Activated naive CD4-positive, alpha-beta T cell treated with anti-CD3 and anti-CD28 coated beads for 36 hours (primary cell): ENCODE measurements at regions of chr6 and their contacts with region 1.

Region 1: GRCh38 chr6:127302728-127303660 is 36.3 kb downstream of the RNF146 start:
- DNase-seq: peak; percentile 72
- H3K4me3 Mint-ChIP-seq: no peak overlapping the region
- H3K27ac Mint-ChIP-seq: no peak overlapping the region
- H3K4me1 Mint-ChIP-seq: peaks cover 42% of the 10 kb centered on the region
- H3K27me3 Mint-ChIP-seq: no peaks in the 10 kb centered on the region

Region 2: GRCh38 chr6:127243501-127243900 is 59.5 kb before region 1 on chr6:
- CTCF ChIA-PET with region 1: no interaction called
- intact Hi-C with region 1: no loop called
- DNase-seq: no peak
- H3K4me3 Mint-ChIP-seq: no peak overlapping the region
- H3K27ac Mint-ChIP-seq: no peak overlapping the region
- H3K4me1 Mint-ChIP-seq: no peaks in the 10 kb centered on the region
- H3K27me3 Mint-ChIP-seq: peaks cover 2% of the 10 kb centered on the region

Region 3: DNA sequence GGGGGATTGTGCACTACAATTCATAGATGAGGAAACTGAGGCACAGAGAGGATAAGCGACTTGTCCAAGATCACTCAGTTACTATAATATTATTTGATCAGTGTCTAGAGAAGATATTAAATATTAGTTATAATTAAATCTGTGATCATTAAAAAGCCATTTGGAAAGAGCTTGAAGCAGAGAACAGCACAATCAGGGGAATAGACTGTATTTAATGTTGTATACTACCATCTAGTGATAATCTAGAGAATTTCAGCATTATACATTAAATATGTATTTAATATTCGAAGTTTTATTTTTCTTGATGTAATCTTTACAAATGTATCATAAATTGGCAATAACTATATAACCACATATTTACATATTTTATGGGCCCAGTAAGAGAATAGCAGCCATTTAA is 236.3 kb after region 1 on chr6:
- CTCF ChIA-PET with region 1: interaction called, 12 read pairs
- intact Hi-C with region 1: loop called (anchors 1 kb)
- DNase-seq: no peak
- H3K4me3 Mint-ChIP-seq: no peak overlapping the region
- H3K27ac Mint-ChIP-seq: no peak overlapping the region
- H3K4me1 Mint-ChIP-seq: no peaks in the 10 kb centered on the region
- H3K27me3 Mint-ChIP-seq: peaks cover 13% of the 10 kb centered on the region

Region 4: GRCh38 chr6:127641905-127642304 is 338.9 kb after region 1 on chr6:
- CTCF ChIA-PET with region 1: no interaction called
- intact Hi-C with region 1: loop called (anchors 2 kb)
- DNase-seq: peak; percentile 8
- H3K4me3 Mint-ChIP-seq: no peak overlapping the region
- H3K27ac Mint-ChIP-seq: no peak overlapping the region
- H3K4me1 Mint-ChIP-seq: no peaks in the 10 kb centered on the region
- H3K27me3 Mint-ChIP-seq: peaks cover 2% of the 10 kb centered on the region

Region 5: GRCh38 chr6:128139519-128139918 is 836.5 kb after region 1 on chr6:
- CTCF ChIA-PET with region 1: no interaction called
- intact Hi-C with region 1: no loop called
- DNase-seq: no peak
- H3K4me3 Mint-ChIP-seq: no peak overlapping the region
- H3K27ac Mint-ChIP-seq: no peak overlapping the region
- H3K4me1 Mint-ChIP-seq: peaks cover 5% of the 10 kb centered on the region
- H3K27me3 Mint-ChIP-seq: no peaks in the 10 kb centered on the region